Heart left ventricle (tissue), 16 donors: ENCODE measurements at regions of chr9 and their contacts with region 1.

Region 1: DNA sequence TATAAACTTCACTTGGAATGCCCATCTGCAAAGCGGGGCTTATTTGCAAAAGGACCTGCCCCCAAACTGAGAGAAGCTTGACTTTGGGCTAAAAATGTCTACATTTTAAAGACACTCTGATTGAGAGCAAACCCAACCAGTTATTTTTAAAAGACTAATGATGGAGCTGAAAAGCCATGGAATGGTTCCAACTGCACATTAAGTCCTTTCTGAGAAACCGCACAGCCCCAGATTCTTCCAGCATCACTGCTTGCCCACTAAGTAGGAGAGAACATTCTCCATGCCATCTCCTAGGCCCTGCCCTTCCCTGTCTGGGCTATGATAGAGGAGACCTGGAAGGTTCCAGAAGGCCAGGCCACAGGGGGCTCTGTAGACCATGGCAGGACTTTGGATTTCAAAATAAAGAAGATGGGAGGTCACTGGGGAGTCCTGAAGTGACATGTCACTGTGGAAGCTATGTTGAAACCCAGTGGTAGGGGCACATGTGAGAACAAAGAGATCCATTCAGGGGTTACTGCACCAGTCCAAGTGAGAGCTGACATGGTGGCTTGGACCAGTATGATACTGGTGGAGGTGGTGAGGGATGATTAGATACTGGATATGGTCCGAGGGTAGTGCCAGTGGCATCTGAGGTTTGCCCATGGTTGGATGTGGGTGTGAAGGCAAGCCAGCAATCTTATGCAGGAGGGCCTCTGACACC is 179.2 kb downstream of the DAB2IP start:
- DNase-seq: peak in 1 of 5 donors; percentile 32
- ATAC-seq: no peak
- H3K4me3 ChIP-seq: no peak overlapping the region
- H3K27ac ChIP-seq: no peak overlapping the region
- H3K4me1 ChIP-seq: no peaks in the 10 kb centered on the region
- H3K27me3 ChIP-seq: no peaks in the 10 kb centered on the region
- CTCF ChIP-seq: no peak
- POLR2A ChIP-seq: no peak

Region 2: DNA sequence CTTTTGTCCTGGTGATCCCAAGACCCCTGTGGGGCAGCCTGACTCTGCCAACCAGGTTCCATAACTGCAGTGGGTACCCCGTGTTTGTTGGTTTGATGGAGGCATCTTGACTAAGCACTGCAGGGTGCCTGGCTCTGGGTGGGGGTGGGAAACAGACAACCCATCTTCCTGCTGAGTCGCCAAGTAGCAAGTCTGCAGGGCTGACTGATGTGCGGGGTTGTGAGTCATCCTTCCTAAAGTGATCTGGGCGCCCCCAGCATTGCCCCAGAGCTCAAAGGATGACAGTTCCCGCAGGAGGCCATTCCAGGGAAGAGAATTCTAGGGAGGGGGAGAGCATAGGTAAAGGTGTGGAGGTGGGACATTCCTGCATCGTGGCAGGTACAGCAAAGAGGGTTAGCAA is 155.6 kb before region 1 on chr9:
- intact Hi-C with region 1: no loop called
- DNase-seq: no peak
- ATAC-seq: no peak
- H3K4me3 ChIP-seq: no peak overlapping the region
- H3K27ac ChIP-seq: peak overlapping the region in 1 of 12 donors; percentile 42
- H3K4me1 ChIP-seq: peaks cover 4 to 70% (median 53%) of the 10 kb centered on the region in 12 donors
- H3K27me3 ChIP-seq: no peaks in the 10 kb centered on the region
- CTCF ChIP-seq: no peak
- POLR2A ChIP-seq: no peak

Region 3: DNA sequence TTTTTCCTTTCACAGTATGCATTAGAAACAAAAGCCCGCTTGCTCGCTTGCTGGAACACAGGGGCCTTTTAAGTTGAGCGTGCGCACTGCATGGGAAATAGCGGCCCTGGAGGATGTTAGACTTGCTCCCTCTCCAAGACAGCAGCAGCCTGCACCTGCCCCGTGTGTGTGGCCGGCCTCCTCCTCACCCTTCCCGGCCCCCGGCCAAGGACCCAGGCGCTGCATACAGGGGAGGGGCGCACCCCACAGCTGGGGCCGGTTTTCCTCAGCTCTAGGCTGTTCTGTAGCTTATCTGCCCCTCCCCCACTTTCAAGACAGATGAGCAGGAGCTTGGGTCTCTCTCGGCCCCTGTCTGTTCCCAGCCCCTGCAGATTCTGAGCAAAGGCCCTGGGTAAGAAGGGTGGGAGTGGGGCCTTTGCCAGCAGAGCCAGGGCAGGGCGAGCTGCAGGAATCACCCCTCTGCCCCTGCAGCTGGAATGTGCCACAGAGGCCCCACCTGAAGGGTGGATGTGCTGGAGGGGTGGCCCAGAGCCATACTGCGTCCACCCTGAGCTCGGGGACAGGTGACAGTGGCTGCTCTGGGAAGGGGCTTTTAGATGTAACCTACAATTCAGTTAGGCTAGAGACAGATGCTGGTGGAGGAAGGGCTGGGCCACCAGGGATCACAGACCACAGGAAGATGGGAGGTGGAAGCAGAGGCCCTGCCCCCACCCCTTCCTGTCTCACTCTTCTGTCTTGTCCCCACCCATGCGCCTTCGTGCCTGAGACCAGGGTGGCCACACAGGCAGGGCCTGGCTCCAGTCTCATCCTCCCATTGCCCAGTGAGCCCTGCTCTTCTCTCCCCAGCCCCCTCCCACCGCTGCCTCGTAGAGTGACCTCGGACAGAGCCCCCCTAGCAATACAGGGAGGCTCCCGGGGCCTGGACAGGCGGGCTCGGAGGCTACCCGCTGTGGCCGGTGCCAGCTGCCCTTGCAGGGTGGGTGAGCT is 46.8 kb before region 1 on chr9:
- intact Hi-C with region 1: loop called in 1 of 10 experiments (anchors 5 kb)
- DNase-seq: peak in 3 of 5 donors; percentile 6 to 58 (median 23)
- ATAC-seq: no peak
- H3K4me3 ChIP-seq: no peak overlapping the region
- H3K27ac ChIP-seq: peak overlapping the region in 1 of 12 donors; percentile 13
- H3K4me1 ChIP-seq: peaks cover 0 to 41% (median 20%) of the 10 kb centered on the region in 12 donors
- H3K27me3 ChIP-seq: no peaks in the 10 kb centered on the region
- CTCF ChIP-seq: no peak
- POLR2A ChIP-seq: no peak

Region 4: GRCh38 chr9:121807823-121808278 is 22.7 kb before region 1 on chr9:
- intact Hi-C with region 1: no loop called
- DNase-seq: peak in 1 of 5 donors; percentile 37
- ATAC-seq: peak in 1 of 4 donors; percentile 30
- H3K4me3 ChIP-seq: no peak overlapping the region
- H3K27ac ChIP-seq: no peak overlapping the region
- H3K4me1 ChIP-seq: peaks cover 0 to 5% (median 0%) of the 10 kb centered on the region in 12 donors
- H3K27me3 ChIP-seq: no peaks in the 10 kb centered on the region
- CTCF ChIP-seq: peak in 3 of 12 donors; percentile 13 to 24 (median 15)
- POLR2A ChIP-seq: no peak

Region 5: GRCh38 chr9:121935739-121936138 is 105.1 kb after region 1 on chr9:
- intact Hi-C with region 1: no loop called
- DNase-seq: no peak
- ATAC-seq: no peak
- H3K4me3 ChIP-seq: no peak overlapping the region
- H3K27ac ChIP-seq: no peak overlapping the region
- H3K4me1 ChIP-seq: no peaks in the 10 kb centered on the region
- H3K27me3 ChIP-seq: no peaks in the 10 kb centered on the region
- CTCF ChIP-seq: no peak
- POLR2A ChIP-seq: no peak